ENCODE measurements at regions of chr2 and their contacts with region 1.

Region 1: DNA sequence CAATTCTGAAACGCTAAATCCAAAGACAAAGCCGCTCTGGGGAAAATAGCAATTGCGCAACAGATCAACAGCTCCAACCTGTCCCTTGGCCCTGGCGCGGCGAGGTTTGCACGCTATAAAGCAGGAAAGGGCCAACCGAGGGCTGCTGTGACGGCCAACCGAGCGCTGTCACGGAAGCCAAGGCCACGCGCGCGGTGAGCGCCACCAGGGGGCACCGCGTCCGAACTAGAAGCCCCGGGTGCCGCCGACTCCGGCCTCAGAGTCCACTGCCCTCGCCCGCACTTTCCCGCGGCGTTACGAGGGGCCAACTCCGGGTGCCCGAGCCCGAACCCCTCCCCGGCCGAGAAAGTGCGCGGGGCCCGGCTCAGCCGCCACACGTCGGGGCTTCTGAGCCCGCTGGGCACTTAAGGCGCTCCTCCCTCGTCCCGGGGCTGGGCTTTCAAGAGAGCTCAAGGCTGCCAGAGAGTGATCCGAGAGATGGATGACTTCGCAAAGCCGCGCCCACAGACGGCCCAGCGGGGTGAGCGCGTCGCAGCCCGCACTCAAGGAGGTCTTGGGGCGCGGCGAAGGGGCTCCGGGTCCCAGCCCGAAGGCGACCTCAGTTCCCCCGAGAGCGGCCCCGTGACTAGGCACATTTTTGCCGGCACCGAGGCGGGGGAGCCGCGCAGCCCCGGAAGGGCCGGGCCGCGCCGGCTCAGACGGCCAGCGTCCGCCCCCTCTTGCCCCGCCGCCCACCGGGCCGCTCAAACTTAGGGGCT is 897 bp downstream of the NFE2L2 start:
- DNase-seq: peak; percentile 97
- ATAC-seq: peak; percentile 53
- H3K4me3 Mint-ChIP-seq: peak overlapping the region; percentile 97
- H3K27ac Mint-ChIP-seq: peak overlapping the region; percentile 100
- H3K4me1 Mint-ChIP-seq: peaks cover 59% of the 10 kb centered on the region
- H3K27me3 Mint-ChIP-seq: no peaks in the 10 kb centered on the region
- CTCF ChIP-seq: no peak

Region 2: GRCh38 chr2:176370467-176371171 is 893.0 kb before region 1 on chr2:
- CTCF ChIA-PET with region 1: no interaction called
- POLR2A ChIA-PET with region 1: no interaction called
- intact Hi-C with region 1: no loop called
- DNase-seq: no peak
- ATAC-seq: no peak
- H3K4me3 Mint-ChIP-seq: no peak overlapping the region
- H3K27ac Mint-ChIP-seq: no peak overlapping the region
- H3K4me1 Mint-ChIP-seq: no peaks in the 10 kb centered on the region
- H3K27me3 Mint-ChIP-seq: peaks cover 8% of the 10 kb centered on the region
- CTCF ChIP-seq: no peak

Region 3: GRCh38 chr2:177106212-177106611 is 157.4 kb before region 1 on chr2:
- CTCF ChIA-PET with region 1: no interaction called
- POLR2A ChIA-PET with region 1: no interaction called
- intact Hi-C with region 1: no loop called
- DNase-seq: no peak
- ATAC-seq: no peak
- H3K4me3 Mint-ChIP-seq: no peak overlapping the region
- H3K27ac Mint-ChIP-seq: no peak overlapping the region
- H3K4me1 Mint-ChIP-seq: no peaks in the 10 kb centered on the region
- H3K27me3 Mint-ChIP-seq: peaks cover 26% of the 10 kb centered on the region
- CTCF ChIP-seq: no peak

Region 4: GRCh38 chr2:177148477-177149154 is 115.0 kb before region 1 on chr2:
- CTCF ChIA-PET with region 1: interaction called, 3 read pairs
- POLR2A ChIA-PET with region 1: interaction called, 16 read pairs
- intact Hi-C with region 1: no loop called
- DNase-seq: peak; percentile 46
- ATAC-seq: peak; percentile 84
- H3K4me3 Mint-ChIP-seq: peak overlapping the region; percentile 89
- H3K27ac Mint-ChIP-seq: peak overlapping the region; percentile 36
- H3K4me1 Mint-ChIP-seq: peaks cover 15% of the 10 kb centered on the region
- H3K27me3 Mint-ChIP-seq: peaks cover 14% of the 10 kb centered on the region
- CTCF ChIP-seq: peak; percentile 36

Region 5: DNA sequence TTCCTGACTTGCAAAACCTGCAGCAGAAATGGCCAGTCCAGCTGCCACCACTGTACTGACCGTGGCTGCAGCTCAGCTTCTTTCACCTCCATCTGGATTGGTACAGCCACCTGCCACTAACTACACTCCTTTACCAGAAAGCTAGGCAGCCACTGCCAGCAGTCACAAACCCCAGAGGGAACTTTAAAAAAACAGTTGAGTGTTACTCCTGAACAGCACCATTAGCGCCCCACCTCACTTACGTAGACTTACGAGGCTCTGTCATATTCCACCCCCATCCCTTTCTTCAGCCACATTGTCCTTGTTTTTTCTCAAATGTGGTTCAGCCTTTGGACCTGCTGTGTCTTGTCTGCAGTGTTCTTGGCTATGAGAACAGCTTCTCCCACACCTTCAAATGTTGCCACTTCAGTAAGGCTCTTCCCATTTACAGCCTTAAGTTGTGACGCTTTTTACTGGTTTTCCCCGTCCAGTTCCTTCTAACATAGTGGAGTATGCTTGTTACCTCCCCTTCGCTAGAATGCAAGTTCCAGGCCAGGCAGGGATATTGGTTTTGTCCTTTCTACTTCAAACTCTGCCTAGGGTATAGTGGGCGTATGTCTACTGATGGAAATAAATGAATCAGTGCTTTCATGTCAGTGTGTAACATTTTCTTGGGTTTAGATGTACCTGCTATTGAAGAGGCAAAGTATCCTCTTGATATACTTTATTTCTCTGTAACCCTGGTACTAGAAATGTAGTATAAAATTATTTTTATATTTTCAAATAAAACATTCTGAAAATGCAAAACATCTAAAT is 34.0 kb before region 1 on chr2:
- CTCF ChIA-PET with region 1: interaction called, 6 read pairs
- POLR2A ChIA-PET with region 1: interaction called, 36 read pairs
- intact Hi-C with region 1: loop called (anchors 5 kb)
- DNase-seq: no peak
- ATAC-seq: no peak
- H3K4me3 Mint-ChIP-seq: no peak overlapping the region
- H3K27ac Mint-ChIP-seq: no peak overlapping the region
- H3K4me1 Mint-ChIP-seq: peaks cover 23% of the 10 kb centered on the region
- H3K27me3 Mint-ChIP-seq: no peaks in the 10 kb centered on the region
- CTCF ChIP-seq: no peak

Region 6: GRCh38 chr2:177281400-177282180 is 18.0 kb after region 1 on chr2:
- CTCF ChIA-PET with region 1: interaction called, 22 read pairs
- POLR2A ChIA-PET with region 1: interaction called, 100 read pairs
- intact Hi-C with region 1: loop called (anchors 2 kb)
- DNase-seq: no peak
- ATAC-seq: peak; percentile 81
- H3K4me3 Mint-ChIP-seq: no peak overlapping the region
- H3K27ac Mint-ChIP-seq: no peak overlapping the region
- H3K4me1 Mint-ChIP-seq: peaks cover 35% of the 10 kb centered on the region
- H3K27me3 Mint-ChIP-seq: no peaks in the 10 kb centered on the region
- CTCF ChIP-seq: no peak

Region 7: DNA sequence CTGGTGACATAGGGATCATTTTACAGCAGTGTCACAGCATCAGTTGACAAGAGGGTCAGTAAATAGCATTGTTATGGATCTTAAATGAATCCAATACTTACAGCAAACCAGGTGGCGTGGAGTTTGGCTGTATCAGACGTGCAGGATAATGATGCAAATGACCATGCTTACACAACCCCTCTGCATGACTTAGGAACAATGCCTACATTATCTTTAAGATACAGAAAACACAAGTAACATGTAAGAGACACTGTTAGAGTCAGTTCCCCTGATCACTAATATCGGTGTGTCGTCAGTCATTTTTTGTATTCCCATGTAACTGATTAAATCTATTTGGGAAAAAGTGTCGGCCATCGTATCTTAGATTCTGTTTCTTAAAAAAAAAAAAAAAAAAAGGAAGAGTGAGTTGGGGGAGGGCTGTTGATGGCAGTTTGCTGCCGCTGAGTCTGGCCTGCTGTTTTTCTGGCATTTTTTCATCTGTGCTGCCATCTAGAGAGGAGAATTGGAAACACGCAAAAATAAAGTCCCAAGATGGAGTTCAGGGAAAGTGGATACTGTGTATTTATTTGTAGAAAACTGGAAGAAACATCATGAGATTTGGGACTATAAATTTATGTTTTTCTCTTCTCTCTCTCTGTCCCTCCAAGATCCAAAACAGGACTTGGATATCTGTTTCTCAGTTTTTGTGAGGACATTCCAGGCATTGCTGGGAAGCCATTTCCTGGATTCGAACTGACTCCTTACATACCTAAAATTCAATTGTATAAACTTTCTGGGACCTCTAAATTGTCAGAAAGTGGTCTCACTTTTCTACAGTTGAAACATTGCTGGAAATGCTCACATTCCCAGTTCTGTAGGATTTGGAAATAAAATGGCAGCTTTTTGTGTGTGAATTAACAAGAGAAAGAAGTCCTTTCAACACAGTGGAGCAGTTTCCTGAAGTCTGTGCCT is 68.7 kb after region 1 on chr2:
- CTCF ChIA-PET with region 1: interaction called, 27 read pairs
- POLR2A ChIA-PET with region 1: interaction called, 27 read pairs
- intact Hi-C with region 1: loop called (anchors 1 kb)
- DNase-seq: no peak
- ATAC-seq: peak; percentile 94
- H3K4me3 Mint-ChIP-seq: peak overlapping the region; percentile 46
- H3K27ac Mint-ChIP-seq: peak overlapping the region; percentile 50
- H3K4me1 Mint-ChIP-seq: peaks cover 9% of the 10 kb centered on the region
- H3K27me3 Mint-ChIP-seq: no peaks in the 10 kb centered on the region
- CTCF ChIP-seq: no peak

Region 8: DNA sequence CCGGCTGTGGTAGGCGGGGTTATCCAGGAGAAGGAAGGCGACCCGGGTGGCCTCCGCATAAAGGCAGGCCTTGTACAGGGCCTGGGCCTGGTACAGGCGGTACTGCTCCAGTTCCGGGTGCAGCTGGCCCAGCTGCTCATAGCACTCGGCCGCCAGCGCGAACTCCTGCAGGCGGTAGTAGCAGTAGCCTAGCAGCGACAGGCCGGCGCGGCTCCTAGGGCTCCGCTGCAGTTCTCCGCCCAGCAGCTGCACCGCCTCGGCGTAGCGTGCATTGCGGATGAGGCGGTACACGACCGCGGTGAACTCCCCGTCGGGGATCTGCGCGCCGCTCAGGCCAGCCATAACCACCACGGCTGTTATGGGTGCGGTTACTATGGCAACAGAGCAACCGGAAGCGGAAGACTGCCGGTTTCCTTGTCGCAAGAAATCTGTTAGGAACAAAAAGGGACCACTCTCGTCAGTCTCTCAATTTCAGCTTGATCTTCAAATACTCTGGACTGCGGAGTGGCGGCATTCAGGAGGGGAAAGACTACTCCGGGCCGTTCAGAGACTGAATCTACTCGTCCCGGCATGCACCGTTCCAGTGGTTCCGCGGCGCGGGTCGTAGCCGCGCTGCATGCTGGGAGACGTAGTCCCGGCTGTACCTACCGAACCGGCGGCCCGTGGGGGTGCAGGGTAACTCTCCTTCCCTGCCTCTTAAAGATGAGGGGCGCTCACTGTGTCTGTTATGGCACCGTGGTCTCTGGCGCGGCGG is 289.0 kb after region 1 on chr2:
- CTCF ChIA-PET with region 1: no interaction called
- POLR2A ChIA-PET with region 1: interaction called, 3 read pairs
- intact Hi-C with region 1: loop called (anchors 1 kb)
- DNase-seq: peak; percentile 87
- ATAC-seq: peak; percentile 90
- H3K4me3 Mint-ChIP-seq: peak overlapping the region; percentile 96
- H3K27ac Mint-ChIP-seq: peak overlapping the region; percentile 100
- H3K4me1 Mint-ChIP-seq: peaks cover 17% of the 10 kb centered on the region
- H3K27me3 Mint-ChIP-seq: no peaks in the 10 kb centered on the region
- CTCF ChIP-seq: no peak

Region 9: GRCh38 chr2:178450774-178451525 is 1187.3 kb after region 1 on chr2 and contains the starts of genes PJVK and PRKRA:
- CTCF ChIA-PET with region 1: no interaction called
- POLR2A ChIA-PET with region 1: interaction called, 11 read pairs
- intact Hi-C with region 1: no loop called
- DNase-seq: peak; percentile 97
- ATAC-seq: peak; percentile 91
- H3K4me3 Mint-ChIP-seq: peak within 1 kb of the TSS; percentile 87
- H3K27ac Mint-ChIP-seq: peak within 1 kb of the TSS; percentile 86
- H3K4me1 Mint-ChIP-seq: peaks cover 28% of the 10 kb centered on the region
- H3K27me3 Mint-ChIP-seq: no peaks in the 10 kb centered on the region
- CTCF ChIP-seq: no peak
- total RNA-seq, gene PJVK: 2.0 and 3.1 TPM in 2 replicates
- total RNA-seq, gene PRKRA: 49.6 and 61.3 TPM in 2 replicates